Naive thymus-derived CD4-positive, alpha-beta T cell (primary cell): ENCODE measurements at regions of chr15 and their contacts with region 1.

Region 1: DNA sequence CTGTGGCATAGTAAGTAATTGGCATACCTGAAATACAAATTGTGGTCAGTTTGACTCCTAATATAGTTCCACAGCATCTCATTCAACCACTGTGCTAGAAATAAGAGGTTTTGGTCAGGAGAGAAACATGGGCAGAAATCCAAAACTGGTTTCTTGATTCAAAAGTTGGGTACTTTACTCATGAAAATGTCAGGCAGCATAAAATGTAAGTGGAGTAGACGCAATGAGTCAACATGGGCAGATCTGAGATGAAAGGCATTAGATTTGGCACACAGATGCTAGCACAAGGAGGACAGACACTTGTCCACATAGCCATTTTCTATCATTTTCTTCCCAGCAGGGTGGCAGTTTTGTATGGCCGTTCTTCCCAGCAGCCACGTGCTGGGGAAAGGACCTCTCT is 255.8 kb upstream of the CDIN1 start:
- DNase-seq: no peak
- ATAC-seq: no peak
- H3K4me3 ChIP-seq: no peak overlapping the region
- H3K4me3 Mint-ChIP-seq: no peak overlapping the region
- H3K27ac ChIP-seq: no peak overlapping the region
- H3K27ac Mint-ChIP-seq: no peak overlapping the region
- H3K4me1 ChIP-seq: no peaks in the 10 kb centered on the region
- H3K4me1 Mint-ChIP-seq: no peaks in the 10 kb centered on the region
- H3K27me3 ChIP-seq: no peaks in the 10 kb centered on the region
- H3K27me3 Mint-ChIP-seq: peaks cover 0 to 9% (median 0%) of the 10 kb centered on the region in 5 donors

Region 2: GRCh38 chr15:36117296-36117787 is 206.3 kb before region 1 on chr15:
- CTCF ChIA-PET with region 1: no interaction called
- POLR2A ChIA-PET with region 1: no interaction called
- intact Hi-C with region 1: loop called in 1 of 2 experiments (anchors 5 kb)
- DNase-seq: no peak
- ATAC-seq: no peak
- H3K4me3 ChIP-seq: no peak overlapping the region
- H3K4me3 Mint-ChIP-seq: no peak overlapping the region
- H3K27ac ChIP-seq: no peak overlapping the region
- H3K27ac Mint-ChIP-seq: no peak overlapping the region
- H3K4me1 ChIP-seq: no peaks in the 10 kb centered on the region
- H3K4me1 Mint-ChIP-seq: no peaks in the 10 kb centered on the region
- H3K27me3 ChIP-seq: no peaks in the 10 kb centered on the region
- H3K27me3 Mint-ChIP-seq: peaks cover 0 to 9% (median 0%) of the 10 kb centered on the region in 5 donors